GM12878 (cell line): ENCODE measurements at regions of chr7 and their contacts with region 1.

Region 1: DNA sequence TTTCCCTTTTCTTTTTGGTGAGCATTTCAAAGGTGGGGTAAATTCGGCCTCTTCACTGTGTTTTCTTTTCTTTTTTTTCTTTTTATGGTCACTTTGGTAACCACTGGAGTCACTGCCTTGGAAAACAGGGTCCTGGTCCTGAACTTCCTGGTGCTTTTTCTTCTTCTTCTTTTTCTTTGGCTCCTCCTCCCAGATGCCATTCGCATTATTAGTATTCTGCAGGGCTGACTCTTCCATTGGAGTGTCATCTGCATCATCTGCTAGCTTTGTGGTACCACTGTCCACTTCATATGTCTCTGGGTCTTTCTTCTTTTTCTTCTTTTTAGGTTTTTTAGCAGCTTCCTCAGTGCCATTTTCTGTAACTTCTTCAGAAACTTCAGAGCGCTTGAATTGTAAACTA is 10.5 kb downstream of the POLR1F start:
- DNase-seq: no peak
- ATAC-seq: no peak
- H3K4me3 ChIP-seq: no peak overlapping the region
- H3K27ac ChIP-seq: no peak overlapping the region
- H3K4me1 ChIP-seq: no peaks in the 10 kb centered on the region
- H3K27me3 ChIP-seq: no peaks in the 10 kb centered on the region
- CTCF ChIP-seq: no peak
- EP300 ChIP-seq: no peak
- POLR2A ChIP-seq: no peak
- RAD21 ChIP-seq: no peak

Region 2: GRCh38 chr7:19595769-19596168 is 102.6 kb before region 1 on chr7:
- CTCF ChIA-PET with region 1: no interaction called
- POLR2A ChIA-PET with region 1: no interaction called
- RAD21 ChIA-PET with region 1: no interaction called
- SMC1A ChIA-PET with region 1: no interaction called
- in situ Hi-C with region 1: no loop called
- intact Hi-C with region 1: no loop called
- DNase-seq: no peak
- ATAC-seq: no peak
- H3K4me3 ChIP-seq: no peak overlapping the region
- H3K27ac ChIP-seq: no peak overlapping the region
- H3K4me1 ChIP-seq: no peaks in the 10 kb centered on the region
- H3K27me3 ChIP-seq: no peaks in the 10 kb centered on the region
- CTCF ChIP-seq: no peak
- EP300 ChIP-seq: no peak
- POLR2A ChIP-seq: no peak
- RAD21 ChIP-seq: no peak

Region 3: DNA sequence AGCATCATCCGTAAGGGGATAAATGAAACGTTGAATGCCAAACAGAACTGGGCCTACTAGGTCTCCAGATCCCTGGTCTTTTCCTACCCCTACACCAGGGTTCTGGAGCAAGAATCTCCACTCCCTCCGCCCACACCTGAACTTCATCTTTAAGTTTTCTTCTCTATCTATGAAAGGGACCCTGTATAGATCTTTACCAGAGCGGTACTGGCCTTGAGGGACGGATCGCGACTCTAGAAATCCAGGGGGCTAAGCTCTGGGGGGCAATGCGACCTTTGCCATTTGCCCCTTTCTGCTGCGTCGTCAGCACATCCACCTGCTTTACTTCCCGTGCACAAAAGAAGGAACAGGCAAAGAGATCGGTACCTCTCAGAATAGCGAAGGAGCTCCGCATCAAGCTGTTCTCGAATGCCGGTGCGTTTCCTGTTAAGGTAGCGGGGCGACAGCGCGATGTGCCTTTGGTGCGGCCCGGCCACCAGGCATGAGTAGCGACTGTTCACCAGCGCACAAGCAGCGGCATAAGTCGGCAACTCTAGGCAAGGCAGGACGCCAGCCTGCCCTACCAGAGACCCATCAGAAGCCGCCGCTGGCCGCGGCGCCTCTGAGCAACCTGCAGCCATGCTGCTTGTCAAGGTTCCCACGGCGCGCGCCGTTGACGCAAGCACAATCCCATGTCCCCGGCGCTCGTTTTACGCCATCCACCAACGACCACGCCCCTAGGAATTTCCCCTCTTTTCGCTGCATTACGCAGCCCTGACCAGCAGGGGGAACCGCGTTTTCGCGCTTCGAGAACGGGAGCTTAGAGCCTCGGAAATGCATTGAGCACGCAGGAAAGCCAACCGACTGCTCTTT is 10.3 kb after region 1 on chr7 and contains the start of gene POLR1F:
- CTCF ChIA-PET with region 1: interaction called, 24 read pairs
- POLR2A ChIA-PET with region 1: no interaction called
- RAD21 ChIA-PET with region 1: interaction called, 6 read pairs
- SMC1A ChIA-PET with region 1: interaction called, 11 read pairs
- in situ Hi-C with region 1: no loop called
- intact Hi-C with region 1: no loop called
- DNase-seq: peak; percentile 90
- ATAC-seq: peak; percentile 95
- H3K4me3 ChIP-seq: peak within 1 kb of the TSS; percentile 90
- H3K27ac ChIP-seq: peak within 1 kb of the TSS; percentile 62
- H3K4me1 ChIP-seq: 0 out of 2 replicates have a peak, but pooled peaks cover 3% of the 10 kb centered on the region
- H3K27me3 ChIP-seq: no peaks in the 10 kb centered on the region
- CTCF ChIP-seq: peak; percentile 92 to 98 (median 97); a peak in 5 of 6 replicates
- EP300 ChIP-seq: 0 out of 4 replicates have a peak, but pooled peaks of 1 of the 2 experiments have one; percentile 33
- POLR2A ChIP-seq: peak; percentile 99
- RAD21 ChIP-seq: peak; percentile 59
- polyA plus RNA-seq, gene POLR1F: 95.3 to 129 TPM

Region 4: DNA sequence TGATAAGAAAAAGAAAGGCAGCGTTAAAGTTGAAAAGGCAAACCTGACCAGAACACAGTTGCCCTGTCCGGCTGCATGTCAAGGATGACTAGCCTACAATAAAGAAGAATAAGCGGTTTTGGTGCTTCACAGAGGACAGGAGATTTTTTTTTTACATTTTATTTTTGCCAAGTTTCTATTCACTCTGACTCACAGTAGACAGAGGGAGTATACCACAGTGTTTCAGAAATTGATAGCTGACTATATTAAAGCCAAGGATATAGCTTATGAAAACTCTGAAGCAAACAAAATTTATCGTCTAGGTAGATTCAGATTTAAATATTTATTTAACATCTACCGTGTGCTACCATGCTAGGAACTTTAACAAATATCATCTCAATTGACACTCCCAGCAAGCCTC is 27.4 kb after region 1 on chr7:
- CTCF ChIA-PET with region 1: no interaction called
- POLR2A ChIA-PET with region 1: no interaction called
- RAD21 ChIA-PET with region 1: no interaction called
- SMC1A ChIA-PET with region 1: no interaction called
- in situ Hi-C with region 1: no loop called
- intact Hi-C with region 1: no loop called
- DNase-seq: no peak
- ATAC-seq: no peak
- H3K4me3 ChIP-seq: no peak overlapping the region
- H3K27ac ChIP-seq: no peak overlapping the region
- H3K4me1 ChIP-seq: no peaks in the 10 kb centered on the region
- H3K27me3 ChIP-seq: no peaks in the 10 kb centered on the region
- CTCF ChIP-seq: no peak
- EP300 ChIP-seq: no peak
- POLR2A ChIP-seq: no peak
- RAD21 ChIP-seq: no peak